Left ventricle myocardium superior (tissue), 1 donor: ENCODE measurements at regions of chr1 and their contacts with region 1.

Region 1: GRCh38 chr1:8439015-8439702 is 121.2 kb downstream of the SLC45A1 start:
- DNase-seq: peak; percentile 87
- ATAC-seq: peak; percentile 95

Region 2: GRCh38 chr1:8525558-8526275 is 86.6 kb after region 1 on chr1:
- intact Hi-C with region 1: loop called (anchors 10 kb)
- DNase-seq: peak; percentile 76
- ATAC-seq: peak; percentile 99